Mammary epithelial cell (primary cell): ENCODE measurements at regions of chr17 and their contacts with region 1.

Region 1: DNA sequence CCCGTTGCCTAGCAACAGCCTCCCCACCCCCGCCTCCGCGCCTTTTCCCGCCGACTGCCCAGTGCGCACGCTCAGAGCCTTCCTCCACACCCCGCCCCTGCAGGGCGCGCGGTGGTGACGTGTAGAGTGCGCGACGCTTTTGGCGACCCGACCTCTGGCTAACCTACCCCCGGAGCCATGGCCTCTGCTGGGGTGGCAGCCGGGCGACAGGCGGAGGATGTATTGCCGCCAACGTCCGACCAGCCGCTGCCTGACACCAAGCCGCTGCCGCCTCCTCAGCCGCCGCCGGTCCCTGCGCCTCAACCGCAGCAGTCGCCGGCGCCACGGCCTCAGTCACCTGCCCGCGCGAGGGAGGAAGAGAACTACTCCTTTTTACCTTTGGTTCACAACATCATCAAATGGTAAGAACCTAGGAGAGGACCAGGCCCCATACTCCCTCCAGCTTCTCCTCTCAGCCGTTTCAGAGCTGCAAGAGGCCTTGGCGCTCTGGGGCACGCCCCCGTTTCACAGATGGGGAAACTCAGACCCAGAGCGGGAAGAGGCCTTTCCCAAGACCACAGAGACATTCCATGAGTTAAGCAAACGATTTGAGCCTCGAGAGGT is at the start of gene MED9:
- DNase-seq: peak; percentile 85
- H3K4me3 ChIP-seq: peak within 1 kb of the TSS; percentile 81 to 99 (median 96)
- H3K27ac ChIP-seq: peak within 1 kb of the TSS; percentile 86
- H3K4me1 ChIP-seq: peaks cover 27% of the 10 kb centered on the region
- H3K27me3 ChIP-seq: no peaks in the 10 kb centered on the region
- CTCF ChIP-seq: no peak
- total RNA-seq, gene MED9: 13.9 to 18.8 TPM

Region 2: DNA sequence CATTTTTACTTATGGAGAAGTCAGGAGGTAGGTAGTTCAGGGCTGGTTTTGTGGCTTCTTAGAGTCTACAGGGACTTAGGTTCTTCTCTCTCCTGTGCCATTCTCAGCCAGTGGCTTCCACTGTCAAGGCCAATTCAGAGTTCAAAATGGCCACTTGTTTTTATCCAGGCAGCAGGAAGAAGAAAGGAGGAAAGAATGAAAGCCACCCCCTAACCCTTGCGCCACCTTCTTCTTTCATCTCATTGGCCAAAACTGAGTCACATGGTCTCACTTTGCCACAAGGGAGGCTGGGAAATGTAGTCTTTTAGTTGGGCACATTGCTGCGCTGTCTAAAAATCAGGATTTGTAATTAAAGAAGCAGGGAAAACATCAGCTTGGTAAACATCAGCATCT is 61.0 kb before region 1 on chr17:
- CTCF ChIA-PET with region 1: no interaction called
- dilution Hi-C with region 1: no loop called
- in situ Hi-C with region 1: no loop called
- intact Hi-C with region 1: loop called (anchors 5 kb)
- DNase-seq: peak; percentile 72
- H3K4me3 ChIP-seq: no peak overlapping the region
- H3K27ac ChIP-seq: peak overlapping the region; percentile 25
- H3K4me1 ChIP-seq: peaks cover 50% of the 10 kb centered on the region
- H3K27me3 ChIP-seq: no peaks in the 10 kb centered on the region
- CTCF ChIP-seq: no peak

Region 3: DNA sequence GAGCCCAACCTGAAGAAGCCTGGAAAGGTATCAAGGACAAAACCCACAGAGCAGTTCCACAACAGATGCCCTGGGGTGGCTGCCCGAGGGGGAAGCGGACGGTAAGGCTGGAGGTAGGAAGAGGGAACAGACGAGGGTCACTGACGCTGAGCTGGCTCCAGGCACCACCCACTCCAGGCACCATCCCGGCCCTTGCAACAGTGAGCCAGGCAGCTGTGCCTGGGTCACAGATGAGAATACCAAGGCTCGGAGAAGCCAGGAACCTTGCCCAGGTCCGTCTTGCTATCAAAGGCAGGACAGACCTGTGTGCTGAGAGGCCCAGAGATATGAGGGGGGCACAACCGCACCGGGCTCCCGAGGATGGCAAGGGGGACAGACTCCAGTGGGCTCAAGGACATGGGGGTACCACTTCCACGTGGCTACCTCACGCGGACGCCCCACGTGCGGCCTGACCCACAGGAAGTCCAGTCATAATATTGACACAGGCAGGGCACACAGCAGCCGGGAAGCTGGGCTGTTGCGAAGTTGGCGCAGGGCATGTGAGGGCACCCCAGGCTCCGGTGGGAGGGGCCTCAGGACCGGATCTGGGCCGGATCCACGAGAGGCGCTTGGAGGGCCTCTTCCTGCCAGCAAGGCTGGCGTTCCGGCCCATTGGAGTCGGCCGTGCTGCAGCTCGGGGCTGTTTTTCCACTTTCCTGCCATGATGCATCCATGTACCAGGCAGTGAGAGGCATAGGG is 84.6 kb after region 1 on chr17:
- CTCF ChIA-PET with region 1: no interaction called
- dilution Hi-C with region 1: loop called (anchors 5 kb)
- in situ Hi-C with region 1: no loop called
- intact Hi-C with region 1: no loop called
- DNase-seq: no peak
- H3K4me3 ChIP-seq: no peak overlapping the region
- H3K27ac ChIP-seq: no peak overlapping the region
- H3K4me1 ChIP-seq: no peaks in the 10 kb centered on the region
- H3K27me3 ChIP-seq: no peaks in the 10 kb centered on the region
- CTCF ChIP-seq: no peak